ENCODE measurements at regions of chr7 and their contacts with region 1.

Region 1: GRCh38 chr7:75667938-75668337 is 70.8 kb downstream of the HIP1 start:
- DNase-seq: no peak
- H3K4me3 ChIP-seq: no peak overlapping the region
- H3K27ac ChIP-seq: no peak overlapping the region
- H3K27me3 ChIP-seq: no peaks in the 10 kb centered on the region
- CTCF ChIP-seq: no peak

Region 2: GRCh38 chr7:75611548-75612178 is 56.3 kb before region 1 on chr7:
- CTCF ChIA-PET with region 1: no interaction called
- POLR2A ChIA-PET with region 1: interaction called, 12 read pairs
- DNase-seq: no peak
- H3K4me3 ChIP-seq: no peak overlapping the region
- H3K27ac ChIP-seq: no peak overlapping the region
- H3K27me3 ChIP-seq: no peaks in the 10 kb centered on the region
- CTCF ChIP-seq: no peak

Region 3: GRCh38 chr7:75642810-75643486 is 25.0 kb before region 1 on chr7:
- CTCF ChIA-PET with region 1: no interaction called
- POLR2A ChIA-PET with region 1: no interaction called
- DNase-seq: peak; percentile 10
- H3K4me3 ChIP-seq: no peak overlapping the region
- H3K27ac ChIP-seq: no peak overlapping the region
- H3K27me3 ChIP-seq: no peaks in the 10 kb centered on the region
- CTCF ChIP-seq: peak; percentile 69

Region 4: DNA sequence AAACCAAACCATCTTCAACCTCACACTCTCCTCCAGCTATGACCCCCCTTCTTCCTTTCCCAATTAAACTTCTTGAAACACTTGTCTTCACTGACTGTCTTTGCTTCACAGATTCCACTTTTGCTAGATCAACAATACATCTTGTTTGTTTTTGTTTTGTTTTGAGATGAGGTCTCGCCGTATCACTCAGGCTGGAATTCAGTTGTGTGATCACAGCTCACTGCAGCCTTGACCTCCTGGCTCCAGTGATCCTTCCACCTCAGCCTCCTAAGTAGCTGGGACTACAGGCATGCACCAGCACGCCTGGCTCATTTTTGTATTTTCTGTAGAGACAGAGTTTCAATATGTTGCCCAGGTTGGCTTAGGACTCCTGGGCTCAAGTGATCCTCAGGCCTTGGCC is 11.1 kb after region 1 on chr7:
- CTCF ChIA-PET with region 1: no interaction called
- POLR2A ChIA-PET with region 1: no interaction called
- DNase-seq: no peak
- H3K4me3 ChIP-seq: no peak overlapping the region
- H3K27ac ChIP-seq: no peak overlapping the region
- H3K27me3 ChIP-seq: no peaks in the 10 kb centered on the region
- CTCF ChIP-seq: no peak